Activated T-helper 1 cell treated with anti-CD3 and anti-CD28 coated beads, Interleukin-12 subunit alpha, Interleukin-12 subunit beta, Interleukin-2, Interleukin-4 antibody, amounts not matched to agents 30 ng/mL and 10 ng/mL and 1 ng/mL, durations not matched to agents 14 hours and 24 hours and 36 hours (primary cell): ENCODE measurements at regions of chr13 and their contacts with region 1.

Region 1: DNA sequence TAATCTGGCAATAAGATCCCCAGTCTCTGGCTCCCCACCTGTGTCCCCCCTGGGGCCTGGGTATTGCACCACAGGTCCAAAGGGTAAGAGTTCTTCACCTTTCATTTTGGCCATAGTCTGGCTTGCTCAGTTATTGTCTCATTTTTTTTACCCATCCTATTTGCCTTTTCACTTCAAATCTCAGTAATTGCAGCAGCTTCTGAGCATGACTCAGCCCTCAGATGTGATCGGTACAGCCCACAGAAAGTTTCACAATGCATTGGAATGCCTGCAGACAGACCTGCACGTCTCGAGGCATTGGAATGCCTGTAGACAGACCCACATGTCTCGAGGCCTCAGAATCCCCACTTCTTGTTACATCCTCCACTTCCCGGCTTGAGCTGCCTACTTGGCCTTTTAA is 173.6 kb downstream of the NUFIP1 start:
- DNase-seq: peak; percentile 10
- H3K4me3 Mint-ChIP-seq: no peak overlapping the region
- H3K27ac Mint-ChIP-seq: peak overlapping the region; percentile 8
- H3K4me1 Mint-ChIP-seq: peaks cover 29% of the 10 kb centered on the region
- H3K27me3 Mint-ChIP-seq: peaks cover 12% of the 10 kb centered on the region

Region 2: GRCh38 chr13:44710576-44710975 is 105.0 kb before region 1 on chr13:
- intact Hi-C with region 1: loop called (anchors 1 kb)
- DNase-seq: no peak
- H3K4me3 Mint-ChIP-seq: no peak overlapping the region
- H3K27ac Mint-ChIP-seq: no peak overlapping the region
- H3K4me1 Mint-ChIP-seq: peaks cover 18% of the 10 kb centered on the region
- H3K27me3 Mint-ChIP-seq: peaks cover 26% of the 10 kb centered on the region

Region 3: GRCh38 chr13:44758630-44759383 is 56.8 kb before region 1 on chr13:
- intact Hi-C with region 1: loop called (anchors 1 kb)
- DNase-seq: no peak
- H3K4me3 Mint-ChIP-seq: no peak overlapping the region
- H3K27ac Mint-ChIP-seq: peak overlapping the region; percentile 79
- H3K4me1 Mint-ChIP-seq: peaks cover 32% of the 10 kb centered on the region
- H3K27me3 Mint-ChIP-seq: peaks cover 2% of the 10 kb centered on the region

Region 4: GRCh38 chr13:44768239-44768638 is 47.4 kb before region 1 on chr13:
- intact Hi-C with region 1: loop called (anchors 1 kb)
- DNase-seq: peak; percentile 63
- H3K4me3 Mint-ChIP-seq: peak overlapping the region; percentile 41
- H3K27ac Mint-ChIP-seq: peak overlapping the region; percentile 82
- H3K4me1 Mint-ChIP-seq: peaks cover 56% of the 10 kb centered on the region
- H3K27me3 Mint-ChIP-seq: no peaks in the 10 kb centered on the region

Region 5: GRCh38 chr13:44988973-44989817 is 173.6 kb after region 1 on chr13 and contains the starts of genes GPALPP1 and NUFIP1:
- intact Hi-C with region 1: loop called (anchors 5 kb)
- DNase-seq: peak; percentile 90
- H3K4me3 Mint-ChIP-seq: peak within 1 kb of the TSS; percentile 91
- H3K27ac Mint-ChIP-seq: peak within 1 kb of the TSS; percentile 91
- H3K4me1 Mint-ChIP-seq: peaks cover 43% of the 10 kb centered on the region
- H3K27me3 Mint-ChIP-seq: no peaks in the 10 kb centered on the region
- total RNA-seq, gene GPALPP1: 29.8 and 33.5 TPM in 2 replicates
- total RNA-seq, gene NUFIP1: 12.2 and 13.5 TPM in 2 replicates

Region 6: GRCh38 chr13:45055198-45055901 is 239.7 kb after region 1 on chr13:
- intact Hi-C with region 1: loop called (anchors 1 kb)
- DNase-seq: peak; percentile 3
- H3K4me3 Mint-ChIP-seq: no peak overlapping the region
- H3K27ac Mint-ChIP-seq: peak overlapping the region; percentile 4
- H3K4me1 Mint-ChIP-seq: peaks cover 20% of the 10 kb centered on the region
- H3K27me3 Mint-ChIP-seq: peaks cover 51% of the 10 kb centered on the region